ENCODE measurements at regions of chr15 and their contacts with region 1.

Region 1: GRCh38 chr15:70245932-70246331 is 148.2 kb upstream of the TLE3 start:
- DNase-seq: peak; percentile 94 to 98 (median 97)
- H3K4me3 ChIP-seq: peak overlapping the region in 1 of 3 experiments; percentile 49
- H3K4me3 Mint-ChIP-seq: peak overlapping the region; percentile 37 to 67
- H3K27ac ChIP-seq: peak overlapping the region; percentile 76 to 83
- H3K27ac Mint-ChIP-seq: peak overlapping the region; percentile 88 to 95 (median 91)
- H3K4me1 ChIP-seq: peaks cover 59 to 64% of the 10 kb centered on the region in 2 donors
- H3K4me1 Mint-ChIP-seq: peaks cover 66% of the 10 kb centered on the region
- H3K27me3 ChIP-seq: no peaks in the 10 kb centered on the region
- H3K27me3 Mint-ChIP-seq: peaks cover 9 to 11% (median 11%) of the 10 kb centered on the region in 3 donors
- CTCF ChIP-seq: no peak

Region 2: GRCh38 chr15:70160267-70160666 is 85.7 kb before region 1 on chr15:
- intact Hi-C with region 1: loop called in 1 of 2 experiments (anchors 5 kb)
- DNase-seq: peak; percentile 65 to 94 (median 73)
- H3K4me3 ChIP-seq: no peak overlapping the region
- H3K4me3 Mint-ChIP-seq: no peak overlapping the region
- H3K27ac ChIP-seq: no peak overlapping the region
- H3K27ac Mint-ChIP-seq: peak overlapping the region in 3 of 7 donors; percentile 67 to 91 (median 83)
- H3K4me1 ChIP-seq: peaks cover 8 to 13% of the 10 kb centered on the region in 2 donors
- H3K4me1 Mint-ChIP-seq: peaks cover 35% of the 10 kb centered on the region
- H3K27me3 ChIP-seq: no peaks in the 10 kb centered on the region
- H3K27me3 Mint-ChIP-seq: peaks cover 12 to 14% (median 14%) of the 10 kb centered on the region in 3 donors
- CTCF ChIP-seq: no peak

Region 3: DNA sequence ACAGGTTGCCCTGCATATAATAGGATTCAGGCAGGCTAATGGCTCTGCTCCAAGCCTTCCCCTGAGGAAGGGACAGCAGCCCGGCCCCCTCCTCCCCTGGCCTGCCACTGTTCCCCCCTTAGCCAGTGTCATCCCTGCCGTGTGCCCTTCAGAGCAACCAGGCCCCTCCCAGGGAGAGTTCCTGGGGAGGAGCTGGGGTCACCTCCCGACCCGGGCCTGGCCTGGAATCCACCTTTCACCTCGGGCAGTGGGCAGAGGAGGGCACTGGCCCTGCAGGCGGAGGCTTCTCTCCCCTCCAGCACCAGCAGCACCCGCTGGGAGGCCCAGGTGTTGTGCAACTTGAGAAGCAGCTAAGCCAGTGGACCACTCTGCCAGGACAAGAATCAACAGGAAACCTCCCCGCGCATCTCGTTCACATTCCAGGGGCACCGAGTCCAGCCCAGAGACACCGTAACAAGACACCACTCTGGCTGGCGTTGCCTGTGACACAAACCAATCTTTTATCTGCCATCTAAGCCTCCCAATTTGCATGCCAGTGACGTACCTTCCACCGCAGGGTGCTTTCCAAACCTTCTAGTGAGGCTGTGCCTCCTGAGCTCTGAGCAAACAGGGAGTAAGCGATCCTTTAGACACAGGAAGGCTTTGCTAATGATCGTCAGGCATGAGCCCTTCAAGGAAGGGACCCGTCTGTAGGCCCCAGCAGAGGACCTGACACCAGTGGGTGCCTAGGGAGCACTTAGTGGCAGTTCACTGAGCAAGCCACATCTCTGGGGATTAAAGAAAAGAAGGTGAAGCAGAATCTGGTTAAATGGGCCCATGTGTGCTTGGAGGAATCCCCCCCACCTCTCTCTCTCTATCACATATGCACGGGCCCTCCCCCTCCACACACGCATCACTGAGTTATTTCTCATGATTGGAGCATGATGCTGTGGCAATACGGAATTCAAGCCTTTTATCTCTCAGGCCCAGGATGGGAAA is 49.3 kb before region 1 on chr15:
- intact Hi-C with region 1: no loop called
- DNase-seq: no peak
- H3K4me3 ChIP-seq: no peak overlapping the region
- H3K4me3 Mint-ChIP-seq: no peak overlapping the region
- H3K27ac ChIP-seq: no peak overlapping the region
- H3K27ac Mint-ChIP-seq: no peak overlapping the region
- H3K4me1 ChIP-seq: no peaks in the 10 kb centered on the region
- H3K4me1 Mint-ChIP-seq: peaks cover 5% of the 10 kb centered on the region
- H3K27me3 ChIP-seq: peaks cover 0 to 7% of the 10 kb centered on the region in 2 donors
- H3K27me3 Mint-ChIP-seq: peaks cover 17 to 34% (median 28%) of the 10 kb centered on the region in 3 donors
- CTCF ChIP-seq: no peak

Region 4: GRCh38 chr15:70210528-70210927 is 35.4 kb before region 1 on chr15:
- intact Hi-C with region 1: no loop called
- DNase-seq: no peak
- H3K4me3 ChIP-seq: no peak overlapping the region
- H3K4me3 Mint-ChIP-seq: no peak overlapping the region
- H3K27ac ChIP-seq: no peak overlapping the region
- H3K27ac Mint-ChIP-seq: no peak overlapping the region
- H3K4me1 ChIP-seq: no peaks in the 10 kb centered on the region
- H3K4me1 Mint-ChIP-seq: no peaks in the 10 kb centered on the region
- H3K27me3 ChIP-seq: no peaks in the 10 kb centered on the region
- H3K27me3 Mint-ChIP-seq: peaks cover 7 to 9% (median 7%) of the 10 kb centered on the region in 3 donors
- CTCF ChIP-seq: no peak

Region 5: GRCh38 chr15:70923311-70924080 is 677.6 kb after region 1 on chr15:
- intact Hi-C with region 1: no loop called
- DNase-seq: no peak
- H3K4me3 ChIP-seq: no peak overlapping the region
- H3K4me3 Mint-ChIP-seq: no peak overlapping the region
- H3K27ac ChIP-seq: no peak overlapping the region
- H3K27ac Mint-ChIP-seq: no peak overlapping the region
- H3K4me1 ChIP-seq: no peaks in the 10 kb centered on the region
- H3K4me1 Mint-ChIP-seq: peaks cover 11% of the 10 kb centered on the region
- H3K27me3 ChIP-seq: no peaks in the 10 kb centered on the region
- H3K27me3 Mint-ChIP-seq: peaks cover 0 to 6% (median 5%) of the 10 kb centered on the region in 3 donors
- CTCF ChIP-seq: no peak

Measured in CD14-positive monocyte (primary cell).